ENCODE measurements at regions of chr14 and their contacts with region 1.

Region 1: DNA sequence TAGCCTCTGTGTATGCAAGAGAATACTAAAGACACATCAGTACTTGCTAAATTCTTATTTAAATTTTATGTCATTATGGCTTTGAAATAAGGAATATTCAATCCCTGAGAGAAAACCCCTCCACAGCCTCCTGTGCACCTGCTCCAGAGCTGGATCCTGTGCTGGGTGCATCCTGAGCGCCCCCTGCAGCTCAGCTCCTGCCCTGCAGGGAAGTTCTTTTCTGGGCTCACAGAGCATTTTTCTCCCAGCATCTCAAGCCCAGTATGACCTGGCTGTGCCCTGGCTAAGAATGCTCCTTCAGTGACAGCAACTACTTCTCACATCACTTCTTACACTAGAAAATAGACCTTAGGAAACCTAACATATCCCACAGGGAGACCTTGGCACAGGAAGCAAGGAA is 1211.7 kb downstream of the TMEM121 start:
- DNase-seq: peak; percentile 46
- ATAC-seq: no peak
- H3K4me3 Mint-ChIP-seq: no peak overlapping the region
- H3K27ac Mint-ChIP-seq: no peak overlapping the region
- H3K4me1 Mint-ChIP-seq: peaks cover 13% of the 10 kb centered on the region
- H3K27me3 Mint-ChIP-seq: no peaks in the 10 kb centered on the region

Region 2: GRCh38 chr14:104795788-104796686 is 1942.0 kb before region 1 on chr14:
- CTCF ChIA-PET with region 1: no interaction called
- POLR2A ChIA-PET with region 1: no interaction called
- intact Hi-C with region 1: no loop called
- DNase-seq: peak; percentile 76
- ATAC-seq: peak; percentile 53
- H3K4me3 Mint-ChIP-seq: peak overlapping the region; percentile 59
- H3K27ac Mint-ChIP-seq: peak overlapping the region; percentile 70
- H3K4me1 Mint-ChIP-seq: peaks cover 35% of the 10 kb centered on the region
- H3K27me3 Mint-ChIP-seq: no peaks in the 10 kb centered on the region

Region 3: GRCh38 chr14:106691601-106692291 is 46.3 kb before region 1 on chr14:
- CTCF ChIA-PET with region 1: interaction called, 9 read pairs
- POLR2A ChIA-PET with region 1: interaction called, 3 read pairs
- intact Hi-C with region 1: loop called in 1 of 2 experiments (anchors 1 kb)
- DNase-seq: peak; percentile 94
- ATAC-seq: peak; percentile 77
- H3K4me3 Mint-ChIP-seq: no peak overlapping the region
- H3K27ac Mint-ChIP-seq: no peak overlapping the region
- H3K4me1 Mint-ChIP-seq: peaks cover 20% of the 10 kb centered on the region
- H3K27me3 Mint-ChIP-seq: no peaks in the 10 kb centered on the region

Measured in activated CD4-positive, alpha-beta T cell treated with anti-CD3 and anti-CD28 coated beads for 36 hours (primary cell).